PC-3 (cell line): ENCODE measurements at regions of chr11 and their contacts with region 1.

Region 1: DNA sequence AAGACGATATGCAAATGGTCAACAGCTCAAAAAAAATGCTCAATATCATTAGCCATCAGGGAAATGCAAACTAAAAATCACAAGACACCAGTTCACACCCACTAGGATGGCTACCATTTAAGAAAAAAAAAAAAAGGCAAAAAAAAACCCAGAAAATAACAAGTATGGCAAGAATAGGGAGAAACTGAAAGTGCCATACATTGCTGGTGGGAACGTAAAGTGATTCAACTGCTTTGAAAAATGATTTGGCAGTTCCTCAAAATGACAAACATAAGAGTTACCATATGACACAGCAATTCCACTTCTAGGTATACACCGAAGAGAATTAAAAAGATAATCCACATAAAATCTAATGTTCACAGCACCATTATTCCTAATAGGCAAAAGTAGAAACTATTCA is 47.5 kb downstream of the PICALM start:
- DNase-seq: no peak
- ATAC-seq: no peak
- H3K4me3 ChIP-seq: no peak overlapping the region
- H3K27ac ChIP-seq: no peak overlapping the region
- H3K4me1 ChIP-seq: no peaks in the 10 kb centered on the region
- H3K27me3 ChIP-seq: no peaks in the 10 kb centered on the region
- CTCF ChIP-seq: no peak

Region 2: DNA sequence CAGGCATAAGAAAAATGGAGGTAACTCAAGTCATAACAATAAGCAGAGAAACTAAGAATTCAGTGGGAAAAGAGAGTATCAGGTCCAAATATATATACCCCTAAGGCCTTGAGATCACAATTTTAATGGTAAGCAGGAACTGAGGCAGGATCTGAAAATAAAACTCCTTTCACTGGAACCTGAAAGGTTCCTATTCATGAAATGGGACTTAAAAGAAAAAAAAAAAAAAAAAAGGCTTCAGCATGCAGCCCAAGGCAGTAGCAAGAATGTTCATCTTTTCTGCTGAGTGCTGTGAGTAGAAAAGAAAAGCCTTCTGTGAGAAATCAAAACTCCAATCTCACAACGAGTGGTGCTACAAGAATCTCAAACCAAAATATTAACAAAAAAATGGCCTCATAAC is 469.5 kb before region 1 on chr11:
- CTCF ChIA-PET with region 1: no interaction called
- POLR2A ChIA-PET with region 1: no interaction called
- intact Hi-C with region 1: no loop called
- DNase-seq: no peak
- ATAC-seq: no peak
- H3K4me3 ChIP-seq: no peak overlapping the region
- H3K27ac ChIP-seq: no peak overlapping the region
- H3K4me1 ChIP-seq: no peaks in the 10 kb centered on the region
- H3K27me3 ChIP-seq: peaks cover 4% of the 10 kb centered on the region; the same call in 1 of the 2 replicates
- CTCF ChIP-seq: no peak

Region 3: GRCh38 chr11:85875142-85875922 is 146.0 kb before region 1 on chr11:
- CTCF ChIA-PET with region 1: no interaction called
- POLR2A ChIA-PET with region 1: no interaction called
- intact Hi-C with region 1: no loop called
- DNase-seq: peak; percentile 88
- ATAC-seq: peak; percentile 89
- H3K4me3 ChIP-seq: no peak overlapping the region
- H3K27ac ChIP-seq: peak overlapping the region; percentile 72
- H3K4me1 ChIP-seq: peaks cover 28% of the 10 kb centered on the region
- H3K27me3 ChIP-seq: no peaks in the 10 kb centered on the region
- CTCF ChIP-seq: no peak

Region 4: GRCh38 chr11:86099874-86100273 is 78.5 kb after region 1 on chr11:
- CTCF ChIA-PET with region 1: no interaction called
- POLR2A ChIA-PET with region 1: no interaction called
- intact Hi-C with region 1: no loop called
- DNase-seq: peak; percentile 82
- ATAC-seq: peak; percentile 29
- H3K4me3 ChIP-seq: no peak overlapping the region
- H3K27ac ChIP-seq: 0 out of 2 replicates have a peak overlapping the region, but pooled peaks have one; percentile 4
- H3K4me1 ChIP-seq: peaks cover 32% of the 10 kb centered on the region
- H3K27me3 ChIP-seq: no peaks in the 10 kb centered on the region
- CTCF ChIP-seq: no peak

Region 5: GRCh38 chr11:86134580-86135318 is 113.4 kb after region 1 on chr11:
- CTCF ChIA-PET with region 1: no interaction called
- POLR2A ChIA-PET with region 1: interaction called, 13 read pairs
- intact Hi-C with region 1: no loop called
- DNase-seq: peak; percentile 55
- ATAC-seq: peak; percentile 67
- H3K4me3 ChIP-seq: no peak overlapping the region
- H3K27ac ChIP-seq: no peak overlapping the region
- H3K4me1 ChIP-seq: peaks cover 10% of the 10 kb centered on the region; the same call in 1 of the 2 replicates
- H3K27me3 ChIP-seq: no peaks in the 10 kb centered on the region
- CTCF ChIP-seq: no peak